CD8-positive, alpha-beta T cell (primary cell): ENCODE measurements at regions of chr6 and their contacts with region 1.

Region 1: DNA sequence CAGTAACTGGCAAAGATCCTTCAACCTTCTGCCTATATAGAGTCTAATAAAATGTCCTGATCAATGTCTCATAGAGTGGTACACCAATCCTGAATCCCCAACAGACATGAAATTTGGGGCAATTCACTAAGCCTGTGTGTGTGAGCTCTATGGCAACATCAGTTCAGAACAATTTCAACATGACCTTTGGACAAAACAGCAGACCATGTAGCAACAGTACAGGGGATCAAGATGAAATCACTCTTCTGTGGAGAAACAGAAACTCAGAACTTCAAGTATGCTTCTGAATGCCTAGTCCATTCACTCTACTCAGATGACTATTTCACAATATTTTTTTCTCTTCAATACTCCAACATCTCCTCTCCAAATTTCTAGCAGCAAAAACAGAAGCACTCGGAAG is 49.1 kb upstream of the OPRM1 start:
- DNase-seq: no peak
- ATAC-seq: no peak
- H3K4me3 ChIP-seq: no peak overlapping the region
- H3K4me3 Mint-ChIP-seq: no peak overlapping the region
- H3K27ac ChIP-seq: no peak overlapping the region
- H3K27ac Mint-ChIP-seq: no peak overlapping the region
- H3K4me1 ChIP-seq: no peaks in the 10 kb centered on the region
- H3K4me1 Mint-ChIP-seq: no peaks in the 10 kb centered on the region
- H3K27me3 ChIP-seq: no peaks in the 10 kb centered on the region
- H3K27me3 Mint-ChIP-seq: no peaks in the 10 kb centered on the region
- CTCF ChIP-seq: no peak

Region 2: GRCh38 chr6:154001494-154002285 is 11.7 kb after region 1 on chr6:
- CTCF ChIA-PET with region 1: interaction called, 3 read pairs
- POLR2A ChIA-PET with region 1: no interaction called
- intact Hi-C with region 1: loop called in 1 of 2 experiments (anchors 1 kb)
- DNase-seq: no peak
- ATAC-seq: no peak
- H3K4me3 ChIP-seq: no peak overlapping the region
- H3K4me3 Mint-ChIP-seq: no peak overlapping the region
- H3K27ac ChIP-seq: no peak overlapping the region
- H3K27ac Mint-ChIP-seq: no peak overlapping the region
- H3K4me1 ChIP-seq: no peaks in the 10 kb centered on the region
- H3K4me1 Mint-ChIP-seq: no peaks in the 10 kb centered on the region
- H3K27me3 ChIP-seq: no peaks in the 10 kb centered on the region
- H3K27me3 Mint-ChIP-seq: peaks cover 9% of the 10 kb centered on the region
- CTCF ChIP-seq: no peak